ENCODE measurements at regions of chr5 and their contacts with region 1.

Region 1: GRCh38 chr5:55994574-55995333 is at the start of gene IL6ST:
- DNase-seq: peak; percentile 95
- ATAC-seq: peak; percentile 92
- H3K4me3 Mint-ChIP-seq: peak within 1 kb of the TSS; percentile 96
- H3K27ac Mint-ChIP-seq: peak within 1 kb of the TSS; percentile 95
- H3K4me1 Mint-ChIP-seq: peaks cover 38% of the 10 kb centered on the region
- H3K27me3 Mint-ChIP-seq: peaks cover 5% of the 10 kb centered on the region
- CTCF ChIP-seq: no peak
- total RNA-seq, gene IL6ST: 39.8 and 48.3 TPM in 2 replicates

Region 2: DNA sequence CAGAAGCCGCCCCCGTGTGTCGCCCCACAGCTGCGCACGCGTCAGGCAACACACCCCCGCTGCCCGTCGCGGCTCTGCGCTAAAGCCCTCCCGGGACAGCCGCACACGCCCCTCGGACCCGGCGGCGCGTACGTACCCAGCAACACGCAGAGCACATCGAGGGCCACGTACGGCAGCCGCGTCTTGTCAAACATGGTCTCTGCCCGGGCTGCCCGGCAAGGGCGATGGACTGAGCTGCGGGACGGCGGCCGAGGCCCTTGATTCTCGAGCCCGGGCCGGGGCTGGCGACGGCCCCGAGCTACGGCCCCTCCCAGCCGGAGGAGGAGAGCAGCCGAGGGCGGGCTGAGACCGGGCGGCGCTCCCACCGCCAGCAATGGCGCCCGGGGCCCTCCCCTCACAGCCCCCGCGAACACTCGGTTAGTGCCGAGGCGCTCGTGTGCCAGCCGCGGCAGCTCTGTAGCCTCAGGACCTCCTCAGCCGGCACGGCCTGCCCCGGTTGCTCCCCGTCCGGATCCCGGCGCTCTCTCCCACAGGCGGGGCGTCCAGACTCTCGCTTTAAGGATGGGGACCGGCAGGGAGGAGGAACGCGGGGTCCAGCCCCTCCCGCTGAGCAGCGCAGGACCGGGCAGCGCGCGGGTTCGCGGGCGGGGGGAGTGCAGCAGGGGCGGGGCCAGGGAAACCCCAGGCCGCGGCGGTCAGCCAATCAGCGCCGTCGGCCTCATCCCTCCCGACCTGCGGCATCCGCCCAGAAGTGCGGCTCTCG is 460.1 kb before region 1 on chr5 and contains the start of gene PLPP1:
- CTCF ChIA-PET with region 1: no interaction called
- POLR2A ChIA-PET with region 1: no interaction called
- intact Hi-C with region 1: loop called (anchors 1 kb)
- DNase-seq: peak; percentile 89
- ATAC-seq: peak; percentile 79
- H3K4me3 Mint-ChIP-seq: peak within 1 kb of the TSS; percentile 90
- H3K27ac Mint-ChIP-seq: peak within 1 kb of the TSS; percentile 87
- H3K4me1 Mint-ChIP-seq: peaks cover 25% of the 10 kb centered on the region
- H3K27me3 Mint-ChIP-seq: no peaks in the 10 kb centered on the region
- CTCF ChIP-seq: no peak
- total RNA-seq, gene PLPP1: 10.3 and 12.0 TPM in 2 replicates

Region 3: DNA sequence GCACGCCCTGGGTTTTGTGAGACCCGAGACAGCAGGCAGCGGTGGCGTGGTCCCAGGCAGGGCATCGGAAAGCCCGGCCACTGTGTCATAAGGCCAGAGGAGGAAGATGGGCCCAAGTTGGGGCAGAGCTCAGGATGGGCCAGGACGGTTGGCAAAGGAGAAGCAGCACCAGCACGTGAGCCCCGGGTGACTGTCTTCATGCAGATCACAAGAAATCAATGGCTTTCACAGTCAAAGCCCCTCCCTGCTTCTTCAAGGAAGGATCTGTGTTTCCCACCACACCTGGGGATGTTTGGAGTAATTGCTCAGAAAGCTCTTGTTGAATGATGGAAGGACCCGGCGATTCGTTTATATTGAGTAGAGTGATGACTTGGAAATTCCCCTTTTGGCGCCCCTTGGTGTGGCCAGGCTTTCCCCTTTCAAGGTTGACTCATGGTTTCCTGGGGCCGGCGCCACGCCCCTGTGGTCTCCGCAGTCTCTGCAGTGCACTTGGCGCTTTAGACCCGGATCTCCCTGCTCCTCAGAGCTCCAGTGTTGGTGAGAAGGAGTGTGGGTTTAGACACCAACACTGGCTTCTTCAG is 91.5 kb before region 1 on chr5:
- CTCF ChIA-PET with region 1: no interaction called
- POLR2A ChIA-PET with region 1: no interaction called
- intact Hi-C with region 1: loop called (anchors 1 kb)
- DNase-seq: peak; percentile 62
- ATAC-seq: peak; percentile 96
- H3K4me3 Mint-ChIP-seq: peak overlapping the region; percentile 56
- H3K27ac Mint-ChIP-seq: peak overlapping the region; percentile 56
- H3K4me1 Mint-ChIP-seq: peaks cover 17% of the 10 kb centered on the region
- H3K27me3 Mint-ChIP-seq: peaks cover 8% of the 10 kb centered on the region
- CTCF ChIP-seq: no peak

Region 4: GRCh38 chr5:56039985-56040384 is 45.2 kb after region 1 on chr5:
- CTCF ChIA-PET with region 1: no interaction called
- POLR2A ChIA-PET with region 1: no interaction called
- intact Hi-C with region 1: no loop called
- DNase-seq: no peak
- ATAC-seq: no peak
- H3K4me3 Mint-ChIP-seq: no peak overlapping the region
- H3K27ac Mint-ChIP-seq: no peak overlapping the region
- H3K4me1 Mint-ChIP-seq: no peaks in the 10 kb centered on the region
- H3K27me3 Mint-ChIP-seq: peaks cover 5% of the 10 kb centered on the region
- CTCF ChIP-seq: no peak

Region 5: DNA sequence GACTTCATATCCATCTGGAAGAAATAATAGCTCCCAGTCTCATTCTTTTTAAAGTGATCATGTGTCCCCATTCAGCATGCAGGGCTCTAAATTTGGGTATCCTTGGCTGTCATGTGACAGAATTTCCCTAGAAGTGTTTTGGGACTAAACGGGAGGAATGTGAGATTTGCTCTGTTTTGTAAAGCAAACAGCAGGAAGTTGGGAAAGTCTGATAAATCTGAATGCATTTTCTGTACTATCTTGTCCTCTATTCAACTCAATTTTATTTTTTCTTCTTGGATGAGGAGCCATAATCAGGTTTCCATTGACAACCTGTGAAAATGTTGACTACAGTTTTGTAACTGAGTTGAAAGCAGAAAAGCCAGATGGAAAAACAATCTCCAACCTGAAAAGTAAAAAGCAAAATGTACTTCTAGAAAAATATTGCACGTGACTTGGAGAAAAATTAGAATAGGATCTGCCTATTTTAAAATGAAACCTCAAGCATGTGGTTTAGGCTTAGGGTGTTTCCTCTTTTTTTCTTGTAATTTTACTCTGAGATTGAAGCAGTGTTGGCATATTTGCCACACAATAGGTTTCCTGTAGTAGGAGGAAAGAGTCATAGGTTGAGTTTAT is 76.2 kb after region 1 on chr5:
- CTCF ChIA-PET with region 1: no interaction called
- POLR2A ChIA-PET with region 1: no interaction called
- intact Hi-C with region 1: loop called (anchors 5 kb)
- DNase-seq: no peak
- ATAC-seq: no peak
- H3K4me3 Mint-ChIP-seq: peak overlapping the region; percentile 5
- H3K27ac Mint-ChIP-seq: no peak overlapping the region
- H3K4me1 Mint-ChIP-seq: peaks cover 16% of the 10 kb centered on the region
- H3K27me3 Mint-ChIP-seq: peaks cover 4% of the 10 kb centered on the region
- CTCF ChIP-seq: no peak

Region 6: GRCh38 chr5:56415356-56415765 is 420.6 kb after region 1 on chr5:
- CTCF ChIA-PET with region 1: no interaction called
- POLR2A ChIA-PET with region 1: interaction called, 3 read pairs
- intact Hi-C with region 1: loop called (anchors 5 kb)
- DNase-seq: peak; percentile 48
- ATAC-seq: peak; percentile 71
- H3K4me3 Mint-ChIP-seq: peak overlapping the region; percentile 78
- H3K27ac Mint-ChIP-seq: peak overlapping the region; percentile 99
- H3K4me1 Mint-ChIP-seq: peaks cover 82% of the 10 kb centered on the region
- H3K27me3 Mint-ChIP-seq: no peaks in the 10 kb centered on the region
- CTCF ChIP-seq: no peak

Measured in activated B cell treated with CpG ODN at 0.5 μM for 24 hours (primary cell).